Endothelial cell of umbilical vein (primary cell): ENCODE measurements at regions of chrX and their contacts with region 1.

Region 1: DNA sequence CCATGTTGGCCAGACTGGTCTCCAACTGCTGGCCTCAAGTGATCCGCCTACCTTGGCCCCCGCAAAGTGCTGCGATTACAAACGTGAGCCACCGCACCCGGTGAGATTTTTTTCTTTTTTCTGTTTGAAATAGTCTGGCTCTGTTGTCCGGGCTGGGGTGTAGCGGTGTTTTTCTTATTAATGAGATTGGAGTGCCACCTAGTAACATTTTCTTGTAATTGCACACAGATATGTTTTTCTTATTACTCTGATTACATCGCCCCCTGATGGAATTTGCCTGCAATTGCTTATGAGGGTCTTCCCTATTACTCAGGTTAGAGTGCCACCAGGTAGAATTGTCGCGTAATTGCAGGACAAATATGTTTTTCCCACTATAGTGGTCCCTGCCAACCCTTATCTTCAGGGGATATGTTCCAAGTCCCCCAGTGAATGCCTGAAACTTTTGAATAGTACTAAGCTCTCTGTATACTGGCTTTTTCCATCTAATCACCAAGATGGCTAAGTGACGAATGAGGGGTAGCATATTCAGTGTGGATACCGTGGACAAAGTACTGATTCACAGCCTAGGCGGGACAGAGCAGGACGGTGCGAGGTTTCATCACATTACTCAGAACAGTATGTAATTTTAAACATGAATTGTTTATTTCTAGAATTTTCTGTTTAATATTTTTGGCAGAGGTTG is 8.6 kb upstream of the PDHA1 start:
- DNase-seq: peak; percentile 4
- H3K4me3 ChIP-seq: no peak overlapping the region
- H3K27ac ChIP-seq: no peak overlapping the region
- H3K4me1 ChIP-seq: no peaks in the 10 kb centered on the region
- H3K27me3 ChIP-seq: no peaks in the 10 kb centered on the region
- CTCF ChIP-seq: peak; percentile 14 to 47
- POLR2A ChIP-seq: no peak

Region 2: DNA sequence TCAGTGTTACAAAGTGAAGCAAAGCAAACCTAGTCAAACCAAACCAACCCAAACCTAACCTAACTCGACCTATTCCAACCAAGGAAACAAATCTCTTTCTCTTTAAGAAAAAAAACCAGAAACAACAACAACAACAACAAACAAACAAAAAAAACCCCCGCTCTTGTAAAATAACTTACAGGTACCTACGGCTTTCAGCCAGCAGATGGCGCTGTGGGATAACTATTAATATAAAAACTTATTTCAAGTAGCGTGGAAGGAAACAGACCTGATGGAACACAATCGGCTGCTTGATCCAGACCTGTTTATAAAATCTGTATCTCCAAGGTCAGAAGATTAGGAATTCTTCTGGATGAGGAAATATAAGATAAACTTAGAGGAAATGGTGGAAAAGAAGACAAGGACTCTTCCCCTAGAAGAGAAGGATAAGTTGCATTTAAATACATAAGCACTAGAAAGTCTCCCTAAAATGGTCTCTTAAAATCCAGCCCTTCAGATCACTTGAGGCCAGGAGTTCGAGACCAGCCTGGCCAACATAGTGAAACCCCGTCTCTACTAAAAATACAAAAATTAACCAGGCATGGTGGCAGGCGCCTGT is 944.0 kb before region 1 on chrX:
- CTCF ChIA-PET with region 1: interaction called, 35 read pairs
- POLR2A ChIA-PET with region 1: no interaction called
- dilution Hi-C with region 1: no loop called
- intact Hi-C with region 1: loop called (anchors 1 kb)
- DNase-seq: peak; percentile 49
- H3K4me3 ChIP-seq: no peak overlapping the region
- H3K27ac ChIP-seq: no peak overlapping the region
- H3K4me1 ChIP-seq: no peaks in the 10 kb centered on the region
- H3K27me3 ChIP-seq: no peaks in the 10 kb centered on the region
- CTCF ChIP-seq: peak; percentile 26 to 33
- POLR2A ChIP-seq: no peak

Region 3: DNA sequence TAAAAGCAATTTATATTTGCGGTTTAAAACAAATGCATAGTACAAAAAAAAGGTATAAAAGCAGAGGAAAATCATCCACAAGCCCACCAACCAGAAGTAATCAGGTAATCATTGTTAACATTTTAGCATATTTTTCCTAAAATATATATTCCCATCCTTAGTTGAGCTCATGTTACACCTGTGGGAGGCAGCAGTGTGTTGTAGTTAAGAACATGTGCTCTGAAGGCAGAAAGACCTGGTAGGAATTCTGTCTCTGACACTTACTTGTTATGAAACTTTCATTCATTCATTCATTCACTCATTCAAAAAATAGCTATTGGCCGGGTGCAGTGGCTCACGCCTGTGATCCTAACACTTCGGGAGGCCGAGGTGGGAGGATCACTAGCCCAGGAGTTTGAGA is 925.0 kb before region 1 on chrX:
- CTCF ChIA-PET with region 1: interaction called, 19 read pairs
- POLR2A ChIA-PET with region 1: no interaction called
- dilution Hi-C with region 1: loop called (anchors 25 kb)
- intact Hi-C with region 1: no loop called
- DNase-seq: peak; percentile 17
- H3K4me3 ChIP-seq: no peak overlapping the region
- H3K27ac ChIP-seq: no peak overlapping the region
- H3K4me1 ChIP-seq: no peaks in the 10 kb centered on the region
- H3K27me3 ChIP-seq: no peaks in the 10 kb centered on the region
- CTCF ChIP-seq: peak in 1 of 2 donors; percentile 3
- POLR2A ChIP-seq: no peak

Region 4: GRCh38 chrX:18674788-18675735 is 660.0 kb before region 1 on chrX:
- CTCF ChIA-PET with region 1: interaction called, 3 read pairs
- POLR2A ChIA-PET with region 1: no interaction called
- dilution Hi-C with region 1: no loop called
- intact Hi-C with region 1: loop called (anchors 10 kb)
- DNase-seq: peak; percentile 80
- H3K4me3 ChIP-seq: peak overlapping the region; percentile 63 to 76 (median 70)
- H3K27ac ChIP-seq: peak overlapping the region; percentile 60
- H3K4me1 ChIP-seq: no peaks in the 10 kb centered on the region
- H3K27me3 ChIP-seq: no peaks in the 10 kb centered on the region
- CTCF ChIP-seq: no peak
- POLR2A ChIP-seq: no peak

Region 5: GRCh38 chrX:18931972-18932371 is 403.1 kb before region 1 on chrX:
- CTCF ChIA-PET with region 1: interaction called, 42 read pairs
- POLR2A ChIA-PET with region 1: no interaction called
- dilution Hi-C with region 1: no loop called
- intact Hi-C with region 1: loop called (anchors 1 kb)
- DNase-seq: peak; percentile 16
- H3K4me3 ChIP-seq: no peak overlapping the region
- H3K27ac ChIP-seq: no peak overlapping the region
- H3K4me1 ChIP-seq: no peaks in the 10 kb centered on the region
- H3K27me3 ChIP-seq: no peaks in the 10 kb centered on the region
- CTCF ChIP-seq: peak; percentile 23 to 35
- POLR2A ChIP-seq: no peak

Region 6: DNA sequence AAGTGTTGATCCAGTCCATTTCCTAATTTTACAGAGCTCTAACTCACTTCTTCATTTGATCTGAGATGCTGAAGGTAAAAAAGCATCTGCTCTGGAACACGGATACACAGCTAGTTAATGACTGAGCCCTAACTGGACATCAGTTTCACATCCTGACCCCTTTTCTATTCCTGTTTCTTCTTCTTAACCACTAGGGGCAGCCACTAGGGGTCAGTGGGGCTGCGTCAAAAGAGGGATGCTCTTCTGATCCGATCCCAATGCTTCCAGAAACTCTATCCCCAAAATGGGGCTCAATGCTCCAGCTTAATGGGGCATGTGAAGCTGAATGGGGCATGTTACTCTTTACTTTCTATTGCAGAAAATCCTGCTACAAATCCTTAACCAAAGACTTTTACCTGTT is 317.8 kb before region 1 on chrX:
- CTCF ChIA-PET with region 1: interaction called, 4 read pairs
- POLR2A ChIA-PET with region 1: no interaction called
- dilution Hi-C with region 1: no loop called
- intact Hi-C with region 1: loop called (anchors 1 kb)
- DNase-seq: no peak
- H3K4me3 ChIP-seq: no peak overlapping the region
- H3K27ac ChIP-seq: no peak overlapping the region
- H3K4me1 ChIP-seq: no peaks in the 10 kb centered on the region
- H3K27me3 ChIP-seq: no peaks in the 10 kb centered on the region
- CTCF ChIP-seq: peak; percentile 13 to 22
- POLR2A ChIP-seq: no peak

Region 7: GRCh38 chrX:19040373-19040772 is 294.7 kb before region 1 on chrX:
- CTCF ChIA-PET with region 1: interaction called, 20 read pairs
- POLR2A ChIA-PET with region 1: no interaction called
- dilution Hi-C with region 1: no loop called
- intact Hi-C with region 1: loop called (anchors 2 kb)
- DNase-seq: peak; percentile 1
- H3K4me3 ChIP-seq: no peak overlapping the region
- H3K27ac ChIP-seq: no peak overlapping the region
- H3K4me1 ChIP-seq: no peaks in the 10 kb centered on the region
- H3K27me3 ChIP-seq: no peaks in the 10 kb centered on the region
- CTCF ChIP-seq: no peak
- POLR2A ChIP-seq: no peak